KBM-7 (cell line): ENCODE measurements at regions of chr14 and their contacts with region 1.

Region 1: GRCh38 chr14:60561845-60562746 is 53.1 kb downstream of the SIX6 start:
- DNase-seq: peak; percentile 58

Region 2: DNA sequence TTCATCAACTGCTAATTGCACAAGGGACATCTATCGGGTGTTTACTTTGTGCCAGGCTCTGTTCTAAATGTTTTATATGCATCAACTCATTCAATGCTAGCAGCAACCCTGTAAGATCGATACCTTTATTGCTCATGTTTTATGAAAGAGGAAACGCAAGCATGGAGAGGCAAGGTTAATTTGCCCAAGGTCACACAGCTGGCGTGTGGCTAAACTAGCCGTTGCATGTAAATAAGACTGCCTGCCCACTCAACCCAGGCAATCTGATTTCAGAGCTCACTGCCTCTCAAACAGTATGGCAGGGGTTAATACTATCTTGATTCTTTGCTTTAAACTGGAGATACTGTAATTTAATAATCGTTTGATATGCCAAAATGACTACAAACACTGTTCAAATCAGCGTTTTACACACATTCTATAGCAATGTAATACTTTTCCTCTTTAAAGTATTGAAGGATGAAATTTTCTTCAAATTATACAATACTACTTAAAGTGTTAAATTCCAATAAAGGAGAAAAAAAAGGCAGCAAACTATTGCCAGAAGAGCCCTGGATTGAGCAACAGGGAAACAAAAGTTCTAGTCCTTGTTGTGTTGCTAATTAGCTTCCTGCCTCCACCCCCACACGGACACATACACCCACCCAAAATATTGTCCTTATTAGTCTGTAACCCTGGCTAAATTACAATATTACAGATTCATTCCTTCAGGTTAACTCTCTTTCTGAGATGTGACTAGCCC is 357.8 kb before region 1 on chr14:
- in situ Hi-C with region 1: loop called (anchors 25 kb)
- DNase-seq: no peak

Region 3: DNA sequence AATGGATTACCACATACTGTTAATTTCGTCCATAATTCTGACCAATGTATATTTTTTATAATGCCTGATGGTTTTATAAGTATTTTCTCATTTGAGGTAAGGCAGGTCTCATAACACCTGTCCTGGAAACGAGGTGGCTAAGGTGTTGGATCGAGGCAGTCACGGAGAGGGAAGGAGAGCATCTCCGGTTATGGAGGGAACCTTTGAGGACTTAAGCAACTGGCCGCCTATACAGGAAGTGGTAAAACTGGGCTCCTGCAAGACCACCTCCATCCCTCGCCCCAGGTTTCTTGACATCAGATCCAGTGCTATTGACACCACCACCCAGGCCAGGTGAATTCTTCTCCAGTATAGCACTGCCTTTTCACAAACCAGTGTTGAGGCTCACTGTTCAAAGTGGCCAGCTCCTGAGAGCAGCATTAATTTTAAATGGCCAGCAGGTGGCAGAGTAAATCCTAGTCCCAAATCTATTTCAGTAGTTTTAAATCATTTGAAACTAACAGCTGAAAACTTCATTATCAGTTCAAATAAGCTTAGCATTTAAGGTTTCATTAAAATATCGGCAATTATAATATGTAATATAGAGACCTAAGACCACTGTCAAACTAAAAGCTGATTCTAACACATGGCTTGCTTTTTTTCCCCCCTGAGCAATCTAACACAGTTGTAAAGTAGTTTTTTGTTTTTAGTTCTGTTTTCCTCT is 212.3 kb before region 1 on chr14:
- in situ Hi-C with region 1: loop called (anchors 25 kb)
- DNase-seq: peak; percentile 50

Region 4: DNA sequence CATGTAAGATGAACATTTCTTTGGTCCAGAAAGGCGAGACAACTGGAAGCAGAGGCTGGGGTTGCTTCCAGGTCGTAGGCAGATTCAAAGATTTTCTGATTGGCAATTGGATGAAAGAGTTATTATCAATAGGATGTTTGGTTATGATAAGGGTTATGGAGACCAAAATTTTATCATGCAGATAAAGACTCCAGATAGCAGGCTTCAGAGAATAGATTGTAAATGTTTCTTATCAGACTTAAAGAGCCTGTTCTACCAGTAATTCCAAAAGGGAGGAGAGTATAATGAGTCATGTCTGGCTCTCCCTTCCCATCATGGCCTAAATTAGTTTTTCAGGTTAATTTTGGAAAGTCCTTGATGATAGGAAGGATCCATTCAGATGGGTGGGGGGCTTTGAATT is 131.8 kb before region 1 on chr14:
- in situ Hi-C with region 1: no loop called
- DNase-seq: no peak